ENCODE measurements at regions of chr1 and their contacts with region 1.

Region 1: DNA sequence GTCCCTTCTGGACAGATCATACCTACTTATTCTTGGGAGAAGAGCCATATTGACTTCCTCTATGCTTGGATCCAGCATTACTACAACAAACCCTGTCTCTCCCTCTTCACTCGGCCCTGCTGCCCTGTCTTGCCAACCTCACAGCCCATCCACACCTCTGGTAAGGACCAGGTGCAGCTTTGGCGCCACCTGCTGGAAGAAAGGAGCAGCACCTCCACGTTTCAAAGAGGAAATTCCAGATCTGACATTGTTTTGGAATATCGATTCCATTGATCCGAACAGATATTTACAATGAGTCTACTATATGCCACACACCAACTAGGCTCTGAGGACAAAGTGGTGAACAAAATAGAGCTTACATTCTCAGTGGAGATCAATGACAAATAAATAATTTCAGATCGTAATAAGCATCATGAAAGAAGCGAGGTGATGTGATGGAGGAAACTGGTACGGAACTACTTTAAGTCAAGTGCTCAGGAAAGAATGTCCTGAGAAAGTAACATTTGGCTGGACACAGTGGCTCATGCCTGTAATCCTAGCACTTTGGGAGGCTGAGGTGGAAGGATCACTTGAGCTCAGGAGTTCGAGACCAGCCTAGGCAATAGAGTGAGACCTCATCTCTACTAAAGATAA is 18.7 kb downstream of the MFSD2A start:
- DNase-seq: no peak
- H3K4me3 ChIP-seq: no peak overlapping the region
- H3K27ac ChIP-seq: no peak overlapping the region
- H3K4me1 ChIP-seq: peaks cover 15 to 30% (median 20%) of the 10 kb centered on the region in 3 donors
- H3K27me3 ChIP-seq: peaks cover 0 to 5% (median 0%) of the 10 kb centered on the region in 4 donors
- CTCF ChIP-seq: peak; percentile 91 to 98 (median 97)
- POLR2A ChIP-seq: no peak

Region 2: DNA sequence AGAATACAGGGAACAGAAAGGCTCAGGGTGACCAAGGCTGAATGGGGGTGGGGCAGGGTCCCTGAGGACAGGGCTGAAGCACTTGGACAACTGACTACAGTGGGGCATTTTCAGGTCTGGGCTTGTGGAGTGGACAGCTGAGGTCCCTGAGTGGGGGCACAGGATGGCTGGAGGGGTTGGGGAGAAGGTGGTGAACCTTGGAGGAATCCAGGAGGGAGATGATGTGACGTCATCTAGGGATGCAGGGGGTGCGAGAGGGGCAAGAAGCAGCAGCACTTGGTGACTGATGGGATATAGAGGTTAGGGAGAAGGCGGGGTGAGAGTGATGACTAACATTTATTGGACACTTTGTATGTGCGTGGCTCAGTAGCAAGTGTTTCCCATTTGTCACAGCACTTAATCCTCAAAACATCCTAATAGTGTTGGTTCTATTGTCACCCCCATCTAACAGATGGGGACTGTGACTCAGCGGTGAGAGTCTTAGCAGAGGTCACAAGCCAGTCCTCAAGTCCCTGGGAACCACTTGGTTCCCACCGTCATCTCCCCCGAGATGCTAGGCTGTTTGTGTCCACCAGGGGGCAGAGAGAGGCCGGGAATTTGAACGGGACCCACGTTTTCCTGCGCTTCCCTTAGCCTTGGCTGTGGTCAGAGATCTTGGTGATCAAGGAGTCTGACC is 157.1 kb before region 1 on chr1:
- intact Hi-C with region 1: loop called (anchors 5 kb)
- DNase-seq: peak; percentile 33
- H3K4me3 ChIP-seq: peak overlapping the region in 2 of 4 donors; percentile 12 to 32
- H3K27ac ChIP-seq: peak overlapping the region; percentile 74 to 90 (median 80)
- H3K4me1 ChIP-seq: peaks cover 22 to 41% (median 23%) of the 10 kb centered on the region in 3 donors
- H3K27me3 ChIP-seq: peaks cover 0 to 4% (median 0%) of the 10 kb centered on the region in 4 donors
- CTCF ChIP-seq: peak; percentile 72 to 99 (median 97)
- POLR2A ChIP-seq: no peak

Region 3: GRCh38 chr1:39919545-39919944 is 54.1 kb before region 1 on chr1:
- intact Hi-C with region 1: loop called (anchors 2 kb)
- DNase-seq: no peak
- H3K4me3 ChIP-seq: no peak overlapping the region
- H3K27ac ChIP-seq: no peak overlapping the region
- H3K4me1 ChIP-seq: peaks cover 5 to 18% (median 6%) of the 10 kb centered on the region in 3 donors
- H3K27me3 ChIP-seq: peaks cover 0 to 16% (median 0%) of the 10 kb centered on the region in 4 donors
- CTCF ChIP-seq: peak; percentile 43 to 86 (median 67)
- POLR2A ChIP-seq: no peak

Region 4: GRCh38 chr1:40040511-40041465 is 67.2 kb after region 1 on chr1 and contains the start of gene CAP1:
- intact Hi-C with region 1: no loop called
- DNase-seq: peak; percentile 94
- H3K4me3 ChIP-seq: peak within 1 kb of the TSS; percentile 88 to 98 (median 94)
- H3K27ac ChIP-seq: peak within 1 kb of the TSS; percentile 90 to 100 (median 98)
- H3K4me1 ChIP-seq: peaks cover 24 to 82% (median 56%) of the 10 kb centered on the region in 3 donors
- H3K27me3 ChIP-seq: no peaks in the 10 kb centered on the region
- CTCF ChIP-seq: no peak
- POLR2A ChIP-seq: peak in 2 of 4 donors; percentile 54 to 78
- total RNA-seq, gene CAP1: 157 to 282 (median 227) TPM